HEK293 (cell line): ENCODE measurements at regions of chr12 and their contacts with region 1.

Region 1: GRCh38 chr12:6890789-6891645 is 13.6 kb upstream of the LRRC23 start:
- H3K4me3 ChIP-seq: peak overlapping the region; percentile 30
- H3K27ac ChIP-seq: peak overlapping the region; percentile 78
- H3K4me1 ChIP-seq: no peaks in the 10 kb centered on the region
- CTCF ChIP-seq: peak; percentile 86

Region 2: DNA sequence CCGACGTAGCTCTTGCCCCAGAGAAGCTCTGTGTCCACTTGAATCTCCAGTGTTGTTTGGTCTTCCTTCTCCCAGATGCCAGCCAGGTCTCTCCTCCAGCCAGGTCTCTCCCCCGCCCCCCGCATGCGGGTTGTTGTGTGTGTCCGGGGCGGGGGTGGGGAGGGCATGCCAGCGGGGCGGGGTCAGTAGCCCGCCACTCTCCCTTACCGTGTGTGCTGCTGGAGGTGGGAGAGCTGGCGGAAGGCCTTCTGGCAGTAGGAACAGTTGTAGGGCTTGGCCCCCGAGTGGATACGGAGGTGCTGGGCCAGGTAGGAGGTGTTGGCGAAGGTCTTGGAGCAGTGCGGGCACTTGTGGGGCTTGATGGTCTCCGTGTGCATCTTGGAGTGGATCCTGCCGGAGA is 218.9 kb before region 1 on chr12:
- CTCF ChIA-PET with region 1: no interaction called
- POLR2A ChIA-PET with region 1: no interaction called
- H3K4me3 ChIP-seq: no peak overlapping the region
- H3K27ac ChIP-seq: no peak overlapping the region
- H3K4me1 ChIP-seq: no peaks in the 10 kb centered on the region
- CTCF ChIP-seq: no peak

Region 3: GRCh38 chr12:6904280-6905278 is 13.6 kb after region 1 on chr12 and contains the start of gene LRRC23:
- CTCF ChIA-PET with region 1: interaction called, 11 read pairs
- POLR2A ChIA-PET with region 1: interaction called, 10 read pairs
- H3K4me3 ChIP-seq: peak within 1 kb of the TSS; percentile 42
- H3K27ac ChIP-seq: peak within 1 kb of the TSS; percentile 57
- H3K4me1 ChIP-seq: peaks cover 13% of the 10 kb centered on the region; the same call in 1 of the 2 replicates
- CTCF ChIP-seq: no peak

Region 4: GRCh38 chr12:6909421-6910145 is 18.6 kb after region 1 on chr12:
- CTCF ChIA-PET with region 1: interaction called, 11 read pairs
- POLR2A ChIA-PET with region 1: interaction called, 10 read pairs
- H3K4me3 ChIP-seq: no peak overlapping the region
- H3K27ac ChIP-seq: no peak overlapping the region
- H3K4me1 ChIP-seq: peaks cover 2% of the 10 kb centered on the region; the same call in 1 of the 2 replicates
- CTCF ChIP-seq: no peak

Region 5: DNA sequence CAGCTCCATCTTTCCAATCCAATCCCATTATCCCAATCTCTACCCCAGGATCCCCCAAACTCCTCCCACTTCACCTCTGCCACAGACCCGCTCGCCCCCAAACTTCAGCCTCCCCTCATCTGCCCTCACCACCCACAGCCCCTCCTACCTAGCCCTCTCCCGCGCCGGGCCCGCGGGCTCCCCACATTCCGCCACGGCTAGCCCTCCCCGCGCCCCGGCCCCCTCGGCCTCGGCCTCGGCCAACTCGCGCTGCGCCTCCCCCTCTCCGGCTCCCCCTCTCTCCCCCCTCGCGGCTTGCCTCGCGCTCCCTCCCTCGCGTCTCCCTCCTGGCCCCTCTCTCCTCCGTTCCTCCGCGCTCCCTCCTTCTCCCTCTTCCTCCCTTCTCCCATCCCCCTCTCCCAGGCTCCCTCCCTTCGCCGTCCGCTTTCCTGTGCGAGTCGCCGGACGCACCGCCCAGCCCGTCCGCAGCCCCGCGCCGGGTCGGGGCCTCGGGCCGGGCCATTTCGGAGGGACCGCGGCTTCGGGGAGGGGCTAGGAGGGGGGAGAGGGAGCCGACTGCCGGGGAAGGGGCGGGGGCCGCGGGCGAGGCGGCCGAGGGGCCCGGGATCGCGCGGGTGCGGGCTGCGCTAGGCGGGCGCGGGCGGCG is 36.5 kb after region 1 on chr12 and contains the start of gene ATN1:
- CTCF ChIA-PET with region 1: interaction called, 10 read pairs
- POLR2A ChIA-PET with region 1: interaction called, 9 read pairs
- H3K4me3 ChIP-seq: peak within 1 kb of the TSS; percentile 74
- H3K27ac ChIP-seq: peak within 1 kb of the TSS; percentile 80
- H3K4me1 ChIP-seq: peaks cover 28% of the 10 kb centered on the region
- CTCF ChIP-seq: 0 out of 2 replicates have a peak, but pooled peaks have one; percentile 38